Caco-2 (cell line): ENCODE measurements at regions of chr17 and their contacts with region 1.

Region 1: DNA sequence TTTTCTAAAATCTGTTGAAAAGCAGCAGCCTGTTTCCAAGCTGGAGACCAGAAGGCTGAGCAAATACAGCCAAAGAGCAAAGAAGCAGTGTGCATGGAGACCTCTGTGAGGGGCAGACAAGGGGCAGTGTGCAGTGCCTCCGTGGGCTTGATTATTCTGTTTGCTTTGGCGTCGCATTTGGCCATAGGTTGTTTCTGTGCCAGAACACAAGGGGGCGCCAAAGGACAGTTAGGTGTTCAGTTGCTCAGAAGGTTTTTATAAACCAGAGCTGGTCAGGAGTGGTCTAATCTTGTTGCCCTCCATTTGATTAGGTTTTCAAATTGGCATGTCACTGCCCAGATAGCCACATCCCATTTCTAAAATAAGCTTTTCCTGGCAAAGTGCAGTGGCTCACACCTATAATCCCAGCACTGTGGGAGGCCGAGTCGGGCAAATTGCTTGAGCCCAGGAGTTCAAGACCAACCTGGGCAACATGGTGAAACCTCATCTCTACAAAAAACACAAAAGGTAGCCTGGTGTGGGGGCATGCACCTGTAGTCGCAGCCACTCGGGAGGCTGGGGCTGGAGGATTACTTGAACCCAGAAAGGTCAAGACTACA is 10.6 kb downstream of the MYH3 start:
- DNase-seq: peak; percentile 51 to 66
- H3K4me3 ChIP-seq: no peak overlapping the region
- H3K4me3 Mint-ChIP-seq: no peak overlapping the region
- H3K27ac Mint-ChIP-seq: no peak overlapping the region
- H3K4me1 ChIP-seq: no peaks in the 10 kb centered on the region
- H3K4me1 Mint-ChIP-seq: no peaks in the 10 kb centered on the region
- H3K27me3 ChIP-seq: no peaks in the 10 kb centered on the region
- H3K27me3 Mint-ChIP-seq: no peaks in the 10 kb centered on the region
- CTCF ChIP-seq: peak; percentile 57 to 70

Region 2: GRCh38 chr17:10598621-10599020 is 47.9 kb before region 1 on chr17:
- CTCF ChIA-PET with region 1: no interaction called
- POLR2A ChIA-PET with region 1: no interaction called
- intact Hi-C with region 1: no loop called
- DNase-seq: no peak
- H3K4me3 ChIP-seq: no peak overlapping the region
- H3K4me3 Mint-ChIP-seq: no peak overlapping the region
- H3K27ac Mint-ChIP-seq: no peak overlapping the region
- H3K4me1 ChIP-seq: no peaks in the 10 kb centered on the region
- H3K4me1 Mint-ChIP-seq: no peaks in the 10 kb centered on the region
- H3K27me3 ChIP-seq: no peaks in the 10 kb centered on the region; the same call in 1 of the 2 replicates
- H3K27me3 Mint-ChIP-seq: peaks cover 6% of the 10 kb centered on the region
- CTCF ChIP-seq: no peak

Region 3: GRCh38 chr17:10683853-10684252 is 37.4 kb after region 1 on chr17:
- CTCF ChIA-PET with region 1: interaction called, 5 read pairs
- POLR2A ChIA-PET with region 1: no interaction called
- intact Hi-C with region 1: loop called (anchors 2 kb)
- DNase-seq: no peak
- H3K4me3 ChIP-seq: no peak overlapping the region
- H3K4me3 Mint-ChIP-seq: no peak overlapping the region
- H3K27ac Mint-ChIP-seq: no peak overlapping the region
- H3K4me1 ChIP-seq: no peaks in the 10 kb centered on the region
- H3K4me1 Mint-ChIP-seq: no peaks in the 10 kb centered on the region
- H3K27me3 ChIP-seq: no peaks in the 10 kb centered on the region
- H3K27me3 Mint-ChIP-seq: no peaks in the 10 kb centered on the region
- CTCF ChIP-seq: peak in 1 of 2 experiments; percentile 1

Region 4: DNA sequence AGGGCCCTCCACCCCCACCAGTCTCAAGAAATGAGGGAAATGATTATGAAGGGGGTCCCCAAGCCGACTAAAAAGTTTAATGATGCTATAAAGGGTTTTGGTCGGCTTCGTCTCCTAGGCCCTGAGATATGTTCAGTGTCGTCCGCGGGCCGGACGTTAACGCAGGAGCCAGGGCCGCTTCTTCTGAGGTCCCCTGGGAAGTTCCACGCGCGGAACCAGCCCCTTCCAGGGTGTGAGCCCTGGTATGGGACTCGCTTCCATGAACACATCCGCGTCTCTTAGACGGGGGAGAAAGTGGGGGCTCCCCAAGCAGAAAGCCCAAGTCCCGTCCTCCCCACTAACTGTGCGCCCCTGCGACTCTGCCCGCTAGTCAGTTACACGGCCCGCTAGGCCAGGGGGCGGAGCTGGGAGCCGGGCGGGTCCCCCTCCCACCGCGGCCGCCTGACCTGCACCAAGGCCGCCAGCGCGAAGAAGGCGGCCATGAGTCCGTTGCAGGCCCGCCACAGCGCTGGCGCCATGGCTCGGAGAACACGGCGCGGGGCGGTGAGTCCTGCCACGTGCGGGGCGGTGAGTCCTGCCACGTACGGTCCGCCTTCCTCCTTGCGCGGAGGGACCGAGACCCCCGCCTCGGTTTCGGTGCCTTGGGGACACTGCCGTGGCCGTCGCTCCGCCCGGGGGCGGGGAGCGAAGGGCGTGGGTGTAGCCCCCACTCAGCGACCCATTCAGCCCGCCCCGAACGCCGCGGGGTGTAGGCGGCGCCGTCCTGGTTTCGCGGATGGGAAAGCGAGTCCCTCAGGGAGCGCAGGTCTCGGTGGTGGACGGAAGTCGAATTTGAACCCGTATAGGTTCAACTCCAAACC is 83.1 kb after region 1 on chr17 and contains the start of gene TMEM220:
- CTCF ChIA-PET with region 1: no interaction called
- POLR2A ChIA-PET with region 1: no interaction called
- intact Hi-C with region 1: loop called (anchors 10 kb)
- DNase-seq: no peak
- H3K4me3 ChIP-seq: no peak within 1 kb of the TSS
- H3K4me3 Mint-ChIP-seq: no peak within 1 kb of the TSS
- H3K27ac Mint-ChIP-seq: no peak within 1 kb of the TSS
- H3K4me1 ChIP-seq: 0 out of 2 replicates have a peak, but pooled peaks cover 5% of the 10 kb centered on the region
- H3K4me1 Mint-ChIP-seq: peaks cover 6% of the 10 kb centered on the region
- H3K27me3 ChIP-seq: no peaks in the 10 kb centered on the region
- H3K27me3 Mint-ChIP-seq: no peaks in the 10 kb centered on the region
- CTCF ChIP-seq: no peak
- total RNA-seq, gene TMEM220: not detected in 2 replicates